WTC11 (cell line): ENCODE measurements at regions of chr16 and their contacts with region 1.

Region 1: GRCh38 chr16:30429678-30430427 is at the start of gene DCTPP1:
- DNase-seq: peak; percentile 91
- ATAC-seq: peak; percentile 98
- H3K4me3 Mint-ChIP-seq: no peak within 1 kb of the TSS
- H3K27ac Mint-ChIP-seq: peak within 1 kb of the TSS; percentile 79
- H3K4me1 Mint-ChIP-seq: peaks cover 17% of the 10 kb centered on the region
- H3K27me3 Mint-ChIP-seq: peaks cover 22% of the 10 kb centered on the region
- CTCF ChIP-seq: peak; percentile 74
- total RNA-seq, gene DCTPP1: 69.0 to 72.2 TPM (median 70.5 TPM) in 3 replicates

Region 2: DNA sequence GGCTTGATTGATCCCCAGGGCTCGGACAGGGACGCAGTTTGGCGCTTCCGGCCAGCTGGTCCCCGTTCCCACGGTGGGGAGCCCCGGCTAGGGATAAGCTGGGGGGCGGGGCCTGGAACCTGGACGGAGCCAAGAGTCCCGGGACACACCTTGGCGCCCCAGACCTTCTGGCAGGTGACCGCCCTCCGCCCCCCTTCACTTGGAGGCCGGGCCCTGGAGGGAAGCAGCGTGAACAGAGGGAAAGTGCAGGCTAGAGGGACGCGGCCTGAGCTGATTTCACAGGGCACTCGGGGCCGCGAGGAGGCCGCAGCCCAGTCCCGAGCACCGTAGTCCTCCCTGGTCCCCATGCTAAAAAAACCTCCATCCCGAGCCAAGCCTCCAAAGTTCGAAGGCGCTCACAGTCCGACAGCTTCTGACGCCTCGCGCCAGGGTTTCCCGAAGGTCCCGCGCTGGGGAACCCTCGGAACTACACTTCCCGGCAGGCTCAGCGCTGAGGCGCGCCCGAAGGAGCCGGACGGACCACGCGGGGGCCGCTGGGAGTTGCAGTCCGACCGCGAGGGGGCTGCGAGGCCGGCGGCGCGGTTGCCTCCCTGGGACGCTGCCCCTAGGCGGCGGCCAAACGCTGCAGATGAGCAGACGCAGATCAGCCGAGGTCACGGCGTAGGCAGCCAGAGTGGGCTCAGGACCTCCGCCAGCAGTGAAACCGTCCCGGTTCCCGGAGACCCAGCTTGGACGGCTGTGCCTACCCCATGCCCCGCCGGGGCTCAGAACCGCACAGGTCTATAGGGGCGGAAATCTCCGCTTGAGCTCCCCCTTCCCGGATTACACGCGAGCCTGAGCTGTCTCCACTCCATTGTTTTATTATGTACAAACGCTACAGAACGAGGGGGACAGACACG is 338.1 kb before region 1 on chr16 and contains the start of gene TBX6:
- CTCF ChIA-PET with region 1: interaction called, 15 read pairs
- POLR2A ChIA-PET with region 1: no interaction called
- DNase-seq: peak; percentile 97
- ATAC-seq: peak; percentile 69
- H3K4me3 Mint-ChIP-seq: peak within 1 kb of the TSS; percentile 87
- H3K27ac Mint-ChIP-seq: peak within 1 kb of the TSS; percentile 98
- H3K4me1 Mint-ChIP-seq: peaks cover 27% of the 10 kb centered on the region
- H3K27me3 Mint-ChIP-seq: peaks cover 3% of the 10 kb centered on the region
- CTCF ChIP-seq: no peak
- total RNA-seq, gene TBX6: 5.1 to 7.6 TPM (median 6.6 TPM) in 3 replicates

Region 3: GRCh38 chr16:30417529-30418349 is 12.1 kb before region 1 on chr16:
- CTCF ChIA-PET with region 1: interaction called, 73 read pairs
- POLR2A ChIA-PET with region 1: interaction called, 15 read pairs
- DNase-seq: peak; percentile 88
- ATAC-seq: peak; percentile 88
- H3K4me3 Mint-ChIP-seq: peak overlapping the region; percentile 54
- H3K27ac Mint-ChIP-seq: no peak overlapping the region
- H3K4me1 Mint-ChIP-seq: peaks cover 9% of the 10 kb centered on the region
- H3K27me3 Mint-ChIP-seq: no peaks in the 10 kb centered on the region
- CTCF ChIP-seq: no peak

Region 4: GRCh38 chr16:30519120-30520049 is 89.5 kb after region 1 on chr16:
- CTCF ChIA-PET with region 1: interaction called, 12 read pairs
- POLR2A ChIA-PET with region 1: no interaction called
- DNase-seq: no peak
- ATAC-seq: no peak
- H3K4me3 Mint-ChIP-seq: no peak overlapping the region
- H3K27ac Mint-ChIP-seq: no peak overlapping the region
- H3K4me1 Mint-ChIP-seq: no peaks in the 10 kb centered on the region
- H3K27me3 Mint-ChIP-seq: peaks cover 10% of the 10 kb centered on the region
- CTCF ChIP-seq: no peak

Region 5: DNA sequence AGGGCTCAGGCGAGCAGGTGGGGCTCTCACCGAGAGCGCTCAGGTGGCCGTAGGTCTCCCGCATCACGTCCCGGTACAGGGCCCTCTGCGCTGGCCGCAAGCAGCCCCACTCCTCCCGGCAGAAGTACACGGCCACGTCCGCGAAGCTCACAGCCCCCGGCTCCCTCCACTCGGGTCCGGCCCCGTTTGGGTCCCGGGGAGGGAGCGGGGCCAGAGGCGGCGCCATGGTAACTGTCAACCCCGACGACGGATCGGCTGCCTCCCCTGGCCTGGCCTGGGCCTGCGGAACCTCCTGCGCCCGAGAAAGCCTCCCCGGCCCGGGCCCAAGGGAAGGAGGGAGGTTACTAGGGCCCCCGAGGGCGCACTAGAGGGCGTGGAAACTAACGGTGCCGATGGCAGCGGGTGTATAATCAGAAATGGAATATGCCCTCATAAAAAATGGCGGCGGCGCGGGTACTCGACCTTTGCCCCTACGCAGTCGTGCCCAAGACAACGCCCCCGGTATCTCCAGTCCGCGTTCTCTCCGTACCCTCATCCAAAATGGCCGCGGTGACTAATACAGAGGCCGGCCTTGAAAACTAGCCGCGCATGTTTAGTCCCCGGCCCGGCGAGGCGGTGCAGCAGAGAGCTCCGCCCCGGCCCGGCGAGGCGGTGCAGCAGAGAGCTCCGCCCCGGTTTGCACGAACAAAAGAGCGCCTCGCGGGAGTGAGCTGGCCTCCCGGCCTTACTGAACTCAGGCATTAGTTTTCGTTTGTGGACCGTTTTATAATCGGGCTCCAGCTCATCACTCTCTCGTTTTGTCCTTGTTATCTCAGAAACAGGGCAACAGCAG is 128.3 kb after region 1 on chr16 and contains the start of gene ZNF764:
- CTCF ChIA-PET with region 1: interaction called, 16 read pairs
- POLR2A ChIA-PET with region 1: interaction called, 4 read pairs
- DNase-seq: peak; percentile 96
- ATAC-seq: peak; percentile 94
- H3K4me3 Mint-ChIP-seq: peak within 1 kb of the TSS; percentile 77
- H3K27ac Mint-ChIP-seq: peak within 1 kb of the TSS; percentile 98
- H3K4me1 Mint-ChIP-seq: peaks cover 29% of the 10 kb centered on the region
- H3K27me3 Mint-ChIP-seq: peaks cover 17% of the 10 kb centered on the region
- CTCF ChIP-seq: no peak
- total RNA-seq, gene ZNF764: 9.0 to 10.4 TPM (median 9.1 TPM) in 3 replicates

Region 6: DNA sequence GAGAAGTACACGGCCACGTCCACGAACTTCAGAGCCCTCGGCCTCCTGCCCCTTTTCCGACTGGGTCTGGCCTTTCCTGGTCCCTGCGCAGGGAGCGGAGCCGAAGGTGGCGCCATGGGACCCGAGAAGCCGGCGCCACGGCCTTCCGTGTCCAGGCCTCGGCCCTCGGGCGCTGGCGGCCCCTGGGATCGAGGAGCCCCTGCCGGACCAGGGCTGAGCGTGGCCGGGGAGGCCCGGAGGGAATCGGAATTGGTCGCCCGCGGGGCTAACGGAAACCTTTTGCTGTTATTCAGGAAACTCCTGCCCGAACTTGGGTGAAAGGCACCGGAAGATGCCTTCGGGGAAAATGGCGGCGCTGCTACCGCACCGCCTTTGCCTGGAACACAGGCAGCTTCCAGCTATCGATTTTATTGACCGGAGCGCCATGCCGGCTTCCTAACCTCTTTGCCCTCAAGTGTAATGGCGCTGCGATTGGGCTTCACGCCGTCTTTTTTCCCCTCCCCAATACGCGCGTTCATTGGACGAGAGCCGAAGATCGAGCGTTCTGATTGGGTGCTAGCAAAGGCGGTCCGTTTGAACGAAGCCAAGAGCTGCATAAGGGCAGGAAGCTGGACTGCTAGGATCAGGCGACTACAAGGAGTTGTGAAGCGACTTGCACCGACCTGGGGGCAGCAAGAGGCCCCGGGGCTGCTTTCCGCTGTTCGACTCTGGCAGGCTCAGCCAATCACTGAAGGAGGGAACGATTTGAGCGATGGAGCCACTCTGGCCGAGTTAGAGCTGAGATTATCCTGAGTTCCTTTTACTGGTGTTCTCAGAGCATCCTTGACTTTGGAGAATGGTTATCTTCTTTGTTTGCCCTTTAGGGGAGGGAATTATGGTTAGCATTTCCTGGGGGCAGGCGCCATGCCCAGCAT is 180.3 kb after region 1 on chr16 and contains the start of gene ZNF689:
- CTCF ChIA-PET with region 1: interaction called, 79 read pairs
- POLR2A ChIA-PET with region 1: interaction called, 8 read pairs
- DNase-seq: peak; percentile 96
- ATAC-seq: peak; percentile 93
- H3K4me3 Mint-ChIP-seq: peak within 1 kb of the TSS; percentile 84
- H3K27ac Mint-ChIP-seq: peak within 1 kb of the TSS; percentile 97
- H3K4me1 Mint-ChIP-seq: peaks cover 3% of the 10 kb centered on the region; the same call in 1 of the 2 replicates
- H3K27me3 Mint-ChIP-seq: no peaks in the 10 kb centered on the region; the same call in 1 of the 2 replicates
- CTCF ChIP-seq: no peak
- total RNA-seq, gene ZNF689: 13.2 to 16.3 TPM (median 15.9 TPM) in 3 replicates

Region 7: DNA sequence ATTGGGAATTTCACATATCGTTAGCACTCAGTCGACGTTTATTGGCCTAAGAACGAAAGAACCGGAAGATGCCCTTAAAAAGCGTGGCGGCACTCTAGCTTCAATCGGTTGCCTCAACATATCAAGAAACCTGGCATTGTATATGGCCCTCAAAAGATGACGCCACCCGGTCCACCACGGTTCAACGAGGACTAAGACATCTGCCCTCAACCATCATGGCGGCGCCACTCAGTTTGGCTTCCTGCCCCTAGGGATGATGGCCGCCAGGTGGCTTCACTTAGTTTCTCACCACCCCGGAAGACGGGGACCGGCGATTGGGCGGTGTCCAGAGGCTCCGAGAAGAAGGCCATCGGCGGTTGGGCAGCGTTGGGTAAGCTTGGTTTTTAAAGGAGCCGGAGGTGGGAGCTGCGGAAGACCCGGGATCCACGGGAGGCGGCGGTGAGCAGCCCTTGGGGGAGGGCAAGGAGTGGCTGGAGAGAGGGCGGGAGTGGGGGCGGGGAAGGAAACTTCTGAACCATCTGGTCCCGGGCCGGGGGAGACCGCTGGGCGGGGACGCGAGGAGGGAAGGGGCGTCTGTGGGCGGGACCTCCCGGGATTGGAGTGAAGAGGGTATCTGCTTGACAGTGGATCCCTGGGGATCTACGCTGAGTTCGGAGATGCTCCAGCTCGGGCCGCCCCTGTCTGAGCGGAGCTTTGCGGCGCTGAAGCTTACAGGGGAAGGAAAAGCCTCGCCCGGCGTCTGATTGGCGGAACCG is 220.7 kb after region 1 on chr16 and contains the start of gene PRR14:
- CTCF ChIA-PET with region 1: interaction called, 15 read pairs
- POLR2A ChIA-PET with region 1: no interaction called
- DNase-seq: peak; percentile 98
- ATAC-seq: peak; percentile 89
- H3K4me3 Mint-ChIP-seq: peak within 1 kb of the TSS; percentile 97
- H3K27ac Mint-ChIP-seq: peak within 1 kb of the TSS; percentile 98
- H3K4me1 Mint-ChIP-seq: peaks cover 15% of the 10 kb centered on the region
- H3K27me3 Mint-ChIP-seq: peaks cover 43% of the 10 kb centered on the region
- CTCF ChIP-seq: 0 out of 2 replicates have a peak, but pooled peaks have one; percentile 16
- total RNA-seq, gene PRR14: 21.9 to 24.3 TPM (median 22.0 TPM) in 3 replicates